ENCODE measurements at regions of chr7 and their contacts with region 1.

Region 1: GRCh38 chr7:25752967-25753791 is 398.8 kb upstream of the NFE2L3 start:
- DNase-seq: no peak
- H3K4me3 ChIP-seq: no peak overlapping the region
- H3K27ac ChIP-seq: peak overlapping the region; percentile 51 to 84 (median 76)
- H3K4me1 ChIP-seq: peaks cover 0 to 23% (median 8%) of the 10 kb centered on the region in 4 donors
- H3K27me3 ChIP-seq: no peaks in the 10 kb centered on the region
- CTCF ChIP-seq: no peak
- EP300 ChIP-seq: no peak
- POLR2A ChIP-seq: no peak

Region 2: DNA sequence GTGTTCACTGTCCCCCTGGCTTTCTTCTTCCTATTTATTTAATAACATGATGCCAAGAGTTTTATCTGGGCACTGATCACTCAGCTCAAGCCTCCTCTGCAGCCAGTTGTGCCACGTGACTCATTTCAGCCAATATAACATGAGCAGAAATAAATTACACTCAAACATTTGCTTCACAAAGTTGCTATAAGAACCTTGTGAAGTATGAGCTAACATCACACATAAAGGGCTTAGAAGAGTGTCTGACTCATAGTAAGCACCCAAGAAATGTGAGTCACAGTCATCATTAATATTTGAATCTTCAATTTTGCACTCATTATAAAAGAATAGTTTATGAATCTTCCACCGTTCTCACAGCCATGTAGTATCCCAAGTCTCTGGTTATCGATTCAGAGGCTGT is 110.3 kb before region 1 on chr7:
- in situ Hi-C with region 1: no loop called
- intact Hi-C with region 1: no loop called
- DNase-seq: no peak
- H3K4me3 ChIP-seq: no peak overlapping the region
- H3K27ac ChIP-seq: no peak overlapping the region
- H3K4me1 ChIP-seq: no peaks in the 10 kb centered on the region
- H3K27me3 ChIP-seq: no peaks in the 10 kb centered on the region
- CTCF ChIP-seq: no peak
- EP300 ChIP-seq: no peak
- POLR2A ChIP-seq: no peak

Region 3: DNA sequence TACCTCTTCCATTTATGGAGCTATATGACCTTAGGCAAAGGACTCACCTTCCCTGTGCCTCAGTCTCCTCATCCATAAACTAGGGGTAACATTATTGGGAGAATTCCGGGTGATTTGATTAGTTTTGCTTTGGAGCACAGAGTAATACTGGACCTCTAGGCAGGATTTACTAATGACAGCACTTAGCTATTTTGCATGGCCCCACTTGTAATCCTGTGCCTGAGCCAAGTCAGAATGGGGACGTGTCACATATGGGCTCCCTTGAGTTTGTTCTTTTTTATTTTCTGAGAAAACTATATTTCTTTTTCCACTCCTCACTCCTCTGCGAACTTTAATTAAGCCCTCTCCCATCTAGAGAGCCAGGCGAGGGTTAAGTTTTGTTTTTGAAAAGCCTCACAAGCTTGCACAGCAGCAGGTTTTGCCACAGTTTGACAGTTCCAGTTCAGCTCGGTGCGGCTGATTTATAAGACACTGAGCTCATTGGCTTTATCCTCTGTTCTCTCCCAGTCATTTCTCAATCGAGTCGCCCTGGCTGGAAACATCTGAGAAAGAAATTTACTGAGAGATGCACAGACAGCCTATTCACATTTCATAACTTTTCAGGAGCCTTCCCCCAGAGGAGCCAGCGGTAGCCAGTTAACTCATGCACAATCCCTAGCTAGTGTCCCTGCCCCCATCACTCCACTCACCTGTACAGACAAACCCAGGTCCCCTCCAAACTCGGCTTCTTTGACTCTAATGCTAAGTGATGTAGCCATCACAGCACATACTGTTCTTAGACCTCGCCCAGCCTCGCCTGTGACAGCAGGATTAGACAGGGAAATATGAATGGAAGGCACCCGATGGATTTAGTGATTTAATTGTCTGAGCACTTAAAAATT is 83.0 kb before region 1 on chr7:
- in situ Hi-C with region 1: no loop called
- intact Hi-C with region 1: loop called (anchors 10 kb)
- DNase-seq: peak; percentile 24
- H3K4me3 ChIP-seq: no peak overlapping the region
- H3K27ac ChIP-seq: peak overlapping the region; percentile 19 to 67 (median 49)
- H3K4me1 ChIP-seq: peaks cover 5 to 29% (median 13%) of the 10 kb centered on the region in 4 donors
- H3K27me3 ChIP-seq: no peaks in the 10 kb centered on the region
- CTCF ChIP-seq: no peak
- EP300 ChIP-seq: no peak
- POLR2A ChIP-seq: no peak

Region 4: DNA sequence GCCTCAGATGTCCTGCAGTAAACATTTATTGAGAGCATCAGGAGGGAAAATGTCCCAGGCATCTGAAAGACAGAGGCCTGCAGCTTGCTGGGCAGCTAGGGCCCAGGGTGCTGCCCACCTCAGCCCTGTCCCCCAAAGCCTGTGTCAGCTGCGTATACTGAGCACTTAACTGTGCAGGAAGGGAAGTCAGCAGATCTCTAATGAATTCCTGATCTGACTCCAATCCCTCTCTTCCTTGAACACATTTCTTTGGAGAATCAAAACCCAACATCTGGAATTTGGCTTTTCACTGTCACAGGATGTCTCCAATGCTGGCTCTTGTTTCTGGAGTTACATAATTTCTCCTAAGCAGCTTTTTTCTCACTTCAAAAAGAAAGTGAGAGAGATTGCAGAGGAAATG is 34.2 kb after region 1 on chr7:
- in situ Hi-C with region 1: no loop called
- intact Hi-C with region 1: no loop called
- DNase-seq: no peak
- H3K4me3 ChIP-seq: no peak overlapping the region
- H3K27ac ChIP-seq: peak overlapping the region; percentile 77 to 84 (median 78)
- H3K4me1 ChIP-seq: peaks cover 0 to 19% (median 2%) of the 10 kb centered on the region in 4 donors
- H3K27me3 ChIP-seq: no peaks in the 10 kb centered on the region
- CTCF ChIP-seq: no peak
- EP300 ChIP-seq: no peak
- POLR2A ChIP-seq: no peak